Endothelial cell of umbilical vein (primary cell): ENCODE measurements at regions of chr9 and their contacts with region 1.

Region 1: DNA sequence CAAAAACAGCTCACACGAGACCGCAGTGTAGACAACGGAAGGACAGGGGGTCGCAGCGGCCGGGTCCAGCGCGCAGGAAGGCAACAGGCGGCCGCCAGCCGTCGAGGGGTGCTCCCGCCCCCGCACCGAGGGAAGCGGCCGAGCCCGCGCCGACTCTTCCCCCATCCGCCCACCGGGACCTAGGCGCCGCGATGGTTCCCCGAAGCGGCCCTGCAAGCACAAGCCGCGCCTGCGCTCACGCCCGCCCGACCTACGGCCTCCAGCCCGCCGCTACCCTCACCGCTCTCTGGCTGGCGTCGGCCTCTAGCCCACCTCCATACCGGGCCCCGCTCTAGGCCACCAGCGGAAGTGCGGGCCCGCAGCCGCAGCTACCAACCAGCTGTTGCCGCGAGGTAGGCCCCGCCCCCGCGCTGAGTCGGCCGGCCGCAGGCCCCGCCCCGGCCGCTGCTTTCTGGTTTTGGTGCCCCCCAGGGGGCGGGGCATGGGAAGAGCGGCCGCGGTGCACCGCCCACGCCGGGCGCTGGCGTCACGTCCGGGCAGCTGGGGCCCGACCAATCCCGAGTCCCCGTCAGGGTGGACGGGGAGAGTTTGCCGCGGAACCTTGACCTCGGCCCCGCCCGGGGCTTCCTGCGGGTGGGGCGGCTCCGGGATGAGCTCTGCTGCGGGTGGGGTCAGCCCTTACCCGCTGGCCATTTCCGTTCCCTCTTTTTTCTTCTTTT is at the start of gene SETX:
- DNase-seq: peak; percentile 97
- H3K4me3 ChIP-seq: peak within 1 kb of the TSS; percentile 59 to 84 (median 75)
- H3K27ac ChIP-seq: peak within 1 kb of the TSS; percentile 72
- H3K4me1 ChIP-seq: peaks cover 33% of the 10 kb centered on the region
- H3K27me3 ChIP-seq: no peaks in the 10 kb centered on the region
- CTCF ChIP-seq: no peak
- POLR2A ChIP-seq: peak; percentile 98
- total RNA-seq, gene SETX: 40.2 and 47.7 TPM in 2 replicates

Region 2: GRCh38 chr9:131943351-131943841 is 411.4 kb before region 1 on chr9:
- CTCF ChIA-PET with region 1: no interaction called
- POLR2A ChIA-PET with region 1: no interaction called
- dilution Hi-C with region 1: no loop called
- intact Hi-C with region 1: no loop called
- DNase-seq: no peak
- H3K4me3 ChIP-seq: no peak overlapping the region
- H3K27ac ChIP-seq: no peak overlapping the region
- H3K4me1 ChIP-seq: no peaks in the 10 kb centered on the region
- H3K27me3 ChIP-seq: no peaks in the 10 kb centered on the region
- CTCF ChIP-seq: no peak
- POLR2A ChIP-seq: no peak

Region 3: DNA sequence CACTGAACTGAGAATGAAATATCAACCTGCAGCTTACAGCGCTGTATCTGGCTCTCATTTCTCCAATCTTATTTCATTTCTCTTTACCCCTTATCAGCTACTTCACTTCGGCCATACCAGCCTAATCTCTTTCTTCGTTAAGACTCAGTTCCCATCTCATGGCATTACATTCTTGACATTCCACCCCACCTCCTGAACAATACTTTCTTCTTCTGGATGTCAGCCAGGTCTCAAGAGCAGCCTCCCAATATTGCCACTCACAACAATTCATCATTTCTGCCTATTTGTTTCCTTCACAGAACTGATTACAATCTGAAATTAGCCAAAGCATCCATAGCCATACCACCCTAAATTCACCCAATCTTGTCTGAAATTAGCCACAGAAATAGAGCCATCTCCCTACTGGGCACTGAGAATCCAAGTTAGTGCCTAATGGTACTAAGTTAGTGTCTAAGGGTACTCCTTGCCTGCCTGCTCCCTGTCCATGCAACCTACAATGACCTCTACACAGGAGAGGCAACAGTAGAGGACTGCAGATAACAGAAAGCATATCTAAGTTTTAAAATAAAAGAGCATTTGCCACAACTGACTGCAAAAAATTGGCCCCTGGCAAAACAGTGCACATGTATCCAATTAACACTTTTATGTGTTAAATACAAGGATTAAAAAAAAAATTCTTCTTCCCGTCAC is 35.2 kb before region 1 on chr9:
- CTCF ChIA-PET with region 1: no interaction called
- POLR2A ChIA-PET with region 1: no interaction called
- dilution Hi-C with region 1: no loop called
- intact Hi-C with region 1: loop called (anchors 2 kb)
- DNase-seq: peak; percentile 78
- H3K4me3 ChIP-seq: no peak overlapping the region
- H3K27ac ChIP-seq: peak overlapping the region; percentile 47
- H3K4me1 ChIP-seq: peaks cover 25% of the 10 kb centered on the region
- H3K27me3 ChIP-seq: no peaks in the 10 kb centered on the region
- CTCF ChIP-seq: no peak
- POLR2A ChIP-seq: no peak

Region 4: DNA sequence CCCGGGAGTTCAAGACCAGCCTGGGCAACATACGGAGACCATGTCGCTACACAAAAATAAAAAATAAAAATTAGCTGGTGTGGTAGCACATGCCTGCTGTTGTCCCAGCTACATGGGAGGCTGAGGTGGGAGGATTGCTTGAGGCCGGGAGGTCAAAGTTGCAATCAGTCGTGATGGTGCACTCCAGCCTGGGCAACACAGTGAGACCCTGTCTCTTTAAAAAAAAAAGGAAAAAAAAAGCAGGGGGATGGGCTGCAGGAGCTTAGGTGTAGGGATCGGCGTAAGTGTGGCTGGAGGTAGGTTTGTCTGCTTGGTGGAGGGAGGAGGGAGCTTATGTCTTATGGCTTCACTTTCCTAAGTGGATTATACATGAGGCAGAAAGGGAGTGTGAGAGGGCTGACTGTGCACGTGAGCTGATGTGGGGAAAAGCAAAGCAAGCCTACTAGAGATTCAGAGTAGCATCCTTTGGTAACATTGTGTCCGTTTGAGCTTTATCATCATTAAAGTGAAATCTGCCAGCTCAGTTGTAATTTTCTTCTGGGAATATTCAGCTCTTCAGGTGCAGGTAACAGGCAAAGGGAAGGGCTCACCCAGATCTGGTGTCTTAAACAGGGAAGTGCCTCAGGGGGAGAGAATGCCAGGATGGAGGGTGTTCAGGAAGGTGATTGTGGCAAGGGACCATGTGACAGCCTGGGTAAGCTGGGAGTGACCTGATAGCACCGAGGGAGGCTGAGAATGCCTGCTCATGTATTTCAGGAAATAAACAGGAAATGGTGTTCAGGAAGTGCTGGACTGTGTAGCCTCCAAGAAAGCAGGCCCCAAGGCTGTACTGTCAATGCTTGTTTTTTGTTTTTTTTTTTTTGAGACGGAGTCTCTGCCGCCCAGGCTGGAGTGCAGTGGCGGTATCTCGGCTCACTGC is 17.6 kb after region 1 on chr9:
- CTCF ChIA-PET with region 1: interaction called, 5 read pairs
- POLR2A ChIA-PET with region 1: interaction called, 16 read pairs
- dilution Hi-C with region 1: no loop called
- intact Hi-C with region 1: loop called (anchors 1 kb)
- DNase-seq: peak; percentile 97
- H3K4me3 ChIP-seq: peak overlapping the region in 1 of 3 experiments; percentile 1
- H3K27ac ChIP-seq: peak overlapping the region; percentile 90
- H3K4me1 ChIP-seq: peaks cover 27% of the 10 kb centered on the region
- H3K27me3 ChIP-seq: no peaks in the 10 kb centered on the region
- CTCF ChIP-seq: no peak
- POLR2A ChIP-seq: no peak